ENCODE measurements at regions of chr2 and their contacts with region 1.

Region 1: DNA sequence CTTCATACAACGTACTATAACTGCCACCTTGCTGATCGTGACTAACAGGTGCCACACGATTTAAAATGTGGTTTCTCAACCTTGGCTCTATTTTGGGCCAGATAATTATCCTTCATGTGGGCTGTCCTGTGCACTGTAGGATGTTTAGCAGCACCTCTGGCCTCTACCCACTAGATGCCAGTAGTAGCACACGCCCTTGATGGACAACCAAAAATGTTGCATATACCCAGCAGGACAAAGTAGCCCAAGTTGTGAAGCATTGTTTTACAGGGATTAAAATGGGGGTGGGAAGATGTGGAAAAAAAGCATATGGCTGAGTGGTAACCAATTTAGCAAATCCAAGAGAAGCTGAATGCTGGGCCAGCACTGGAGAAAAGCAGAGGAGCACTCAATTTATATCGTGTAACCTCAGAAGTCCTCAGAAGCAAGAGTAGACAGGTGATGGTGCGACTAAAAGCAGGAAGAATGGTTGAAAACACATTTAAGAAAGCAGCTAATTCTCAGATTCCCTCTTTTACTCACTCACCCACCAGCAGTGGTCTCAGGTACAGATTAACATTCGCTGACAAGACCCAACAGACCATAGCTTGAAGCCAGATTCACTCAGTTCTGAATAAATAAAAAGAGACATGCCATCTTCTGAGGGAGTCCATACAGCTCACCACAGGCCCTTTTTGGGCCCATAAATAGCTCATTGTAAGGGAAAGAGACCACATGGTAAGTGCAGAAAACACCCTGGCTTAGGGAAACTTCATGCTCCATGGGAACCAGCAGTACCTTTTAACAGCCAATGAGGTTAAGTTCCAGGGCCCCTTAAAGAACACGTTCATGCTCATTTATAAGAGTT is 50.6 kb downstream of the RAPH1 start:
- DNase-seq: no peak
- ATAC-seq: peak; percentile 87

Region 2: GRCh38 chr2:203453858-203454451 is 30.5 kb before region 1 on chr2:
- intact Hi-C with region 1: no loop called
- DNase-seq: no peak
- ATAC-seq: peak; percentile 78

Region 3: GRCh38 chr2:203650860-203651613 is 166.5 kb after region 1 on chr2:
- intact Hi-C with region 1: loop called (anchors 2 kb)
- DNase-seq: no peak
- ATAC-seq: peak; percentile 74

Region 4: GRCh38 chr2:203909261-203909967 is 424.9 kb after region 1 on chr2:
- intact Hi-C with region 1: loop called (anchors 2 kb)
- DNase-seq: no peak
- ATAC-seq: peak; percentile 83